Caco-2 (cell line): ENCODE measurements at regions of chr4 and their contacts with region 1.

Region 1: GRCh38 chr4:39469429-39470077 is 10.7 kb downstream of the LIAS start:
- DNase-seq: peak; percentile 76
- H3K4me3 ChIP-seq: no peak overlapping the region
- H3K4me3 Mint-ChIP-seq: no peak overlapping the region
- H3K27ac Mint-ChIP-seq: peak overlapping the region; percentile 54
- H3K4me1 ChIP-seq: peaks cover 6% of the 10 kb centered on the region
- H3K4me1 Mint-ChIP-seq: no peaks in the 10 kb centered on the region
- H3K27me3 ChIP-seq: no peaks in the 10 kb centered on the region
- H3K27me3 Mint-ChIP-seq: no peaks in the 10 kb centered on the region
- CTCF ChIP-seq: peak; percentile 84 to 86

Region 2: GRCh38 chr4:39495454-39496213 is 26.1 kb after region 1 on chr4:
- CTCF ChIA-PET with region 1: interaction called, 6 read pairs
- POLR2A ChIA-PET with region 1: no interaction called
- intact Hi-C with region 1: loop called (anchors 2 kb)
- DNase-seq: no peak
- H3K4me3 ChIP-seq: no peak overlapping the region
- H3K4me3 Mint-ChIP-seq: no peak overlapping the region
- H3K27ac Mint-ChIP-seq: no peak overlapping the region
- H3K4me1 ChIP-seq: peaks cover 9% of the 10 kb centered on the region
- H3K4me1 Mint-ChIP-seq: no peaks in the 10 kb centered on the region
- H3K27me3 ChIP-seq: no peaks in the 10 kb centered on the region
- H3K27me3 Mint-ChIP-seq: no peaks in the 10 kb centered on the region
- CTCF ChIP-seq: no peak

Region 3: DNA sequence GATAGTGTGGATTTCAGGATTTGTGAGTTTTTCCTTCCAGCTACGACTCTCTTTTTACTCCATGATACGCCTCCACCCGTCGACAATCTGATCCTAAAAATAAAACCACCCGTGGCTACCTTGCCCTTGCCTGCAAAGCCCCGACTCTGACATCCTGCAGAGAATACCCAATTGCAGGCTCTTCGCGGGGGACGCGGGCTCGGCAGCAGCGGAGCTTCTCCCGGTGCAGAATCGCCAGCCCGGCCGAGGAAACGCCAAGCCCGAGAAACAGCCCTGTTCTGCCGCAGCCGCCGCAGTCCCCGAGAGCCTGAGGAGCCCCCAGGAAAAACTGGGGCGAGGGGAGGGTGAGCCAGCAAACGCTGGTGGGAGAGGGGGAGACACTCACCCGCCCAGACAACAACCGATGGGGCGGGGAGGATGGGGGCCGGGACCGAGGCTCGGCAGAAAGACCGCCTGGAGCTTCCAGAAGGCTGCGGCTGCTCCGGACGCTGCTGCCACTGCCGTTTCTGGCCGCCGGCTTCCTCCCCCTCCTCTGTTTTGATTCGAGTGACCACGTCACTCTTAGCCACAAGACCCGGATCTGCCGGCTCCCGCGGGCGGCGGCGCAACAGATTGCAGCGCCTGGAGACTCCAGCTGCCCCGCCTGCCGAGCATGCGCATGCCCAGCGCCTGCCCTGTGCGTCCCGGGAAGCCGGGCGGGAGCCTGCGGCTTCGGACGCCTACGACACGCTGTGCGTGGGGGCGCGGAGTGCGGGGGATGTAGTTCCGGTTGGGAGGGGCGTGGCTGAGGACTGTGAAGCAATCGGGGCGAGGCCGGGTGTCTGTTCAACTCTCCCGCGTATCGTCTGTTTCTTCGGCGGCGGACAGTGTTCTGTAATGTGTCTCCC is 169.0 kb after region 1 on chr4 and contains the start of gene SMIM14:
- CTCF ChIA-PET with region 1: interaction called, 6 read pairs
- POLR2A ChIA-PET with region 1: no interaction called
- intact Hi-C with region 1: loop called (anchors 5 kb)
- DNase-seq: peak; percentile 98 to 99
- H3K4me3 ChIP-seq: peak within 1 kb of the TSS; percentile 94
- H3K4me3 Mint-ChIP-seq: peak within 1 kb of the TSS; percentile 85
- H3K27ac Mint-ChIP-seq: peak within 1 kb of the TSS; percentile 74
- H3K4me1 ChIP-seq: peaks cover 28% of the 10 kb centered on the region
- H3K4me1 Mint-ChIP-seq: peaks cover 15% of the 10 kb centered on the region
- H3K27me3 ChIP-seq: no peaks in the 10 kb centered on the region
- H3K27me3 Mint-ChIP-seq: no peaks in the 10 kb centered on the region
- CTCF ChIP-seq: no peak
- total RNA-seq, gene SMIM14: 37.6 and 41.0 TPM in 2 replicates

Region 4: GRCh38 chr4:39697740-39698423 is 228.3 kb after region 1 on chr4 and contains the start of gene UBE2K:
- CTCF ChIA-PET with region 1: interaction called, 3 read pairs
- POLR2A ChIA-PET with region 1: no interaction called
- intact Hi-C with region 1: loop called (anchors 2 kb)
- DNase-seq: peak; percentile 91 to 94
- H3K4me3 ChIP-seq: peak within 1 kb of the TSS; percentile 79
- H3K4me3 Mint-ChIP-seq: peak within 1 kb of the TSS; percentile 88
- H3K27ac Mint-ChIP-seq: peak within 1 kb of the TSS; percentile 92
- H3K4me1 ChIP-seq: peaks cover 20% of the 10 kb centered on the region
- H3K4me1 Mint-ChIP-seq: peaks cover 18% of the 10 kb centered on the region
- H3K27me3 ChIP-seq: no peaks in the 10 kb centered on the region
- H3K27me3 Mint-ChIP-seq: no peaks in the 10 kb centered on the region
- CTCF ChIP-seq: no peak
- total RNA-seq, gene UBE2K: 141 and 144 TPM in 2 replicates

Region 5: DNA sequence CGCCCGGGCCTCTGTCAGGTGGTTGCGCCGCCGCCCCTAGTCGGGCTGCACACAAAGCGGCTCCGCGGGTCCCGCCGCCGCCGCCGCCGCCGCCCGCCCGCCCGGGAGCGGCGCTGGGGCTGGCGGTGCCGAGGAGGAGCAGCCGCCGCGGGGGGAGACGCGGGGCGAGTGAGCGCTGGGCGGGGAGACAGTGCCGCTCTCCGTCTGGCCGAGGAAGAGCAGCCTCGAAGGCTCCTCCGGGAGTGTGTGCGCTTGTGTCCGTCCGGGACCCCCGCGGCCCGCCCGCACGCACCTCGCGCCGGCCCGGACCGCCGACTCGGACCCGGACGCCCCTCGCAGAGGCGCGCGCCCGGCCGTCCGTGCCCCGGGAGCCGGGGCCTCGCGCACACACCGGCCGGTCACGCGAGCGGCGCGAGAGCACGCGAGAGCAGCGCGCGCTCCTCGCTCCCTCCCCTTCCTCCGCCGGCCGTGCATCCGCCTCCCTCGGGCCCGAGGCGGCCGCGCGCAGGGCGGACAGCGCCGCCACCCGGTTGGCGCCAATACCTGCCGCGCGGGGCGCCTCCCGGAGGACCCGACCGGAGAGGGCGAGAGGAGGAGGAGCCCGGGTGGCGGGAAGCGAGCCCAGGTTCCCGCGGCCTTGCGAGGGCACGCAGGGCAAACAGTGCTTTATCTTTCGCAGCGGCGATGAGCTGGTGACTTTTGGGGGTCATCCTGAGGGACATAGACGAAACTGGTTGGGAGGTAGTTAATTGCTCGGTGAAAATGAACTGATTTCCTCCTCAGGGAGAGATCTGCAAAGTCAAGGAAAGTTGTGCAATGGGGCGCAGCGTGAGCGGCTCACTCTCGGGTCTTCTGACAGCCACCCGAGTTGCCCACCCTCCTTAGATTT is 508.2 kb after region 1 on chr4 and contains the start of gene PDS5A:
- CTCF ChIA-PET with region 1: interaction called, 4 read pairs
- POLR2A ChIA-PET with region 1: no interaction called
- intact Hi-C with region 1: loop called (anchors 1 kb)
- DNase-seq: peak; percentile 85 to 94
- H3K4me3 ChIP-seq: peak within 1 kb of the TSS; percentile 92
- H3K4me3 Mint-ChIP-seq: peak within 1 kb of the TSS; percentile 79
- H3K27ac Mint-ChIP-seq: peak within 1 kb of the TSS; percentile 86
- H3K4me1 ChIP-seq: peaks cover 11% of the 10 kb centered on the region
- H3K4me1 Mint-ChIP-seq: peaks cover 6% of the 10 kb centered on the region
- H3K27me3 ChIP-seq: no peaks in the 10 kb centered on the region
- H3K27me3 Mint-ChIP-seq: no peaks in the 10 kb centered on the region
- CTCF ChIP-seq: peak; percentile 73 to 82
- total RNA-seq, gene PDS5A: 78.8 and 84.0 TPM in 2 replicates